ENCODE measurements at regions of chr20 and their contacts with region 1.

Region 1: DNA sequence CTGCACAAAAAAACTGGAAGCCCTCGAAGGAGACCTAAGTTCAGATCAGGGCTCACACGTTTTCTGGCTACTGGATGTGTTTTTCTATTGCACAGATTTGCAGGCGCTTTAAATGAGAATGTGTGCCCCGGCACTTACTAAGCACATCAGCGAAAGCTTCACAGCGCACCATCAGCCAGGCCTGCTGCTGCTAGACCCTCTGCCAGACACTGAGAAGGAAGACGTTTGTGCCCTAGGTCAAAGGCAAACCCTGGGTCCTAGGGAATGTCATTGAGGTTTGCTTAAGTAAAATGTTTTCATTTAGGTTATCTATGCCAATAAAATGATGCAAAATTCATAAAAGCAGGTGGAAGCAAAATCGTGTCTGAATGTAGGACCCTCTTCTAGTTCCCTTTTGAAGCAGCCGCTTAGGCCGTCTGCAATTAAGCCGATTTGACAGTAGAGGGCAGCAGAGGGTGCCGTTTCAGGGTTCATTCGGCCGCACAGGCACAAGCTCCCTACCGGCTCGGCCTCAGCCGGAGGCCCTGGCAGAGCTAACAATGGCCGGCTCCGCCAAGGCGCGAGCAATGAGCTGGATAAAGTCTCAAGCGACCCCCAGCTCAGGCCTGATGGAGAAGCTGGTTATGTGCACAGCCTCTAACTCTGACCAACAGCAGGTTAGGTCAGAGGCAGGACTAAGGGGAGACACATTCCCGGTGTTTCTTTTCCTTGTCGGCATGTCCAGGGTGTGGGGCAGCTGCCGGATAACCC is 107.2 kb upstream of the FOXA2 start:
- DNase-seq: peak; percentile 85
- ATAC-seq: peak; percentile 95

Region 2: DNA sequence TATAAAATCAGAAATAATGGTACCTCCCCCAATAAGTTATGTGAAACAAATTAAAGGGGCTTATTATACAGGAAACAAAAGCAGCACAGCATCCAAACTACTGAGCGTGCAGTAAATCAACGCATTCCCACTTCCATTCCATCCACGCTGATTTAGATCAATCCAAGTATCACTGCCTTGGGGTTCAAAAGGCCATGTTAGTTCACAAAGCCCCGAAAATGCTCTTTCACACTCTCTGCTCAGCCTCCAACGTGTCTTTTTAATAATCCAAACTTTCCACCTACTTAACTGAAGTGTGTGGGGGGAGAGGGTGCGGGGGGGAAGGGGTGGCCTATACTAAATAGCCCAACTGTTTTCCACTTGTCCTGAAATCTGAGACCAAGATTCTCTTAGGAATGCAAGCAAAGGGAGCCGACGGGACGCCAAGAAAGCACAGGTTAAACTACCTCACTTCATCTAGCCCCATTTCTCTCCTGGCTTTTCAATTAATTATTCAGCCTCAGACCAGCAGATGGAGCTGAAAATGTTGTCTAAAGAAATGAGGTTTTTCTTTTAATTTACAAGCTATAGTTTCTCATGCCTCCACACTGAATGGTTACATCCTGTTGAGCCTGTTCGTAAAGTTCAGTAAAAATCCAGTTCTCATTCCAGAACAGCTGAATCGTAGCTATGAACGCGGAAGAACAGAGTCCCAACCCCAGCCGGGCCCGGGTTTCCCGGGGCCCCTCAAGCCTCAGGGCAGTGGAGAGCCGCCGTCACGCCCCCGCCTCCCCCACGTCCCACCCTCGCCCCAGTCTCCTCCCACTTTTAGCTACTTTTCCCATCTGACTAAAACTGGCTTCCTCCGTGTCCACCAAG is 658.0 kb after region 1 on chr20:
- intact Hi-C with region 1: loop called (anchors 10 kb)
- DNase-seq: peak; percentile 90
- ATAC-seq: peak; percentile 88

Region 3: DNA sequence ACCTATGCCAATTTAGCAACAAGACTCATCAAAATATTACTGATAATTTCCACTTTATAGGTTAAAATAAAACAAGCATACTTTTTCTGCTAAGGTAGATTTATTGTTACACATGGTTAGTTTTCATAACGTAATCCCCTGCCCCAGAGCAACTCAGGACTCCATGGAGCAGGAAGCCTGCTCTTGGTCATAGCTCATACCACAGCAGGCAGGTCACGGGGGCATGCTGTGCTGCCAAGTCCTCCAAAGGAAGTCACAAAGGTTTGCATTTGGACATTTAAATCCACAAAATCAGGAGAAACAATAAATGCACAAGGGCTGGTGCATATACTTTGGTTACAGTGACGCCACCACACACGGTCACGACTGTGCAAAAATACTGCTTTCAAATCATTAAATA is 682.9 kb after region 1 on chr20:
- intact Hi-C with region 1: no loop called
- DNase-seq: no peak
- ATAC-seq: no peak

Measured in sciatic nerve (tissue), 2 donors.